Endothelial cell of umbilical vein (primary cell): ENCODE measurements at regions of chr5 and their contacts with region 1.

Region 1: GRCh38 chr5:128596071-128596470 is 58.0 kb upstream of the FBN2 start:
- DNase-seq: peak; percentile 56
- H3K4me3 ChIP-seq: no peak overlapping the region
- H3K27ac ChIP-seq: no peak overlapping the region
- H3K4me1 ChIP-seq: peaks cover 2% of the 10 kb centered on the region
- H3K27me3 ChIP-seq: no peaks in the 10 kb centered on the region
- CTCF ChIP-seq: no peak
- POLR2A ChIP-seq: no peak

Region 2: DNA sequence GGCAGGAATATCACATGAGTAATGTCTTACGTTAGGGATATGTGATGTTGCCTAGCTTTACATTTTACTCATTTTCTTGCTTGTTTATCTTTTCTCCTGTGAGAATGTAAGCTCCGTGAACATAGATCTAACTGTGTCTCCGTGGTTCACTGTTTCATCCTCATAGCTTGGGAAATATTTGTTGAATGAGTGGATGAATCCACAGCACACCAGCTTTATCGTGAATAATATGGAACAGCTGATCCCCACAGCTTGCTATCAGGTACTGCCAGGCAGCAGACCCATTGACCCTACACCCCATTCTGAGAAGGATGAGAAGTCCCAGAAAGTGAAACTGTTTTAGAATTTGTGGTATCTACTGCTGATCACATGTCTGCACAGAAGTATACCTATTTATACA is 48.8 kb after region 1 on chr5:
- CTCF ChIA-PET with region 1: no interaction called
- POLR2A ChIA-PET with region 1: no interaction called
- dilution Hi-C with region 1: no loop called
- intact Hi-C with region 1: no loop called
- DNase-seq: peak; percentile 86
- H3K4me3 ChIP-seq: peak overlapping the region in 2 of 3 experiments; percentile 24 to 50
- H3K27ac ChIP-seq: peak overlapping the region; percentile 57
- H3K4me1 ChIP-seq: peaks cover 20% of the 10 kb centered on the region
- H3K27me3 ChIP-seq: no peaks in the 10 kb centered on the region
- CTCF ChIP-seq: no peak
- POLR2A ChIP-seq: no peak

Region 3: GRCh38 chr5:128988476-128988875 is 392.4 kb after region 1 on chr5:
- CTCF ChIA-PET with region 1: no interaction called
- POLR2A ChIA-PET with region 1: interaction called, 10 read pairs
- dilution Hi-C with region 1: no loop called
- intact Hi-C with region 1: no loop called
- DNase-seq: no peak
- H3K4me3 ChIP-seq: no peak overlapping the region
- H3K27ac ChIP-seq: no peak overlapping the region
- H3K4me1 ChIP-seq: no peaks in the 10 kb centered on the region
- H3K27me3 ChIP-seq: no peaks in the 10 kb centered on the region
- CTCF ChIP-seq: no peak
- POLR2A ChIP-seq: no peak